PC-3 (cell line): ENCODE measurements at regions of chr3 and their contacts with region 1.

Region 1: DNA sequence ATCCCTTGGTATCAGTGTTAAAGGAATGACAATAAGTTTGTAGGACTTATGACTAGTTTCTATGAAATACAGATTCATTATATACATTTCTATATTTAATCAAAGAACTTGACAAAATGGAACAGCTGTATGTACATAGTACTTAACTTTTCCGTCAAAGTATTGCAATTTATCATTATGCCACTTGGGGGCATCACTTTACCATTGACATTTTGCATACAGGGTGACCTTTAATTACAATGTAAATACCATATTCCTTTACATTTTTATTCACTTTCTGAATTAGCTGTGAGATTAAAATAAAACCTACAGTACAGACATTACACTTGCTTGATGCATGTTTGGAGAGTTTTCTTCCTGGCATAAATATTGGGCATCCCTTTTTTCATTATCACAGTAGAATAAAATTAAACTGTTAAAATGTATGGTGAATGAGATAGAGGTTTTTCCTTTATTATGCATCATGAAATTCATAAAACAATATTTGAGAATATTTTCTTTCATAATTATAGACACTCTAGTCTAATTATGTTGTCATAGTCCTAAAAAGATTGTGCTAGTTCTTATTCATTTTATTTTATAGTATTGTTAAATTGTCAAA is 6.9 kb downstream of the NEK11 start:
- DNase-seq: peak; percentile 79
- ATAC-seq: 0 out of 2 replicates have a peak, but pooled peaks have one; percentile 18
- H3K4me3 ChIP-seq: no peak overlapping the region
- H3K27ac ChIP-seq: no peak overlapping the region
- H3K4me1 ChIP-seq: peaks cover 29% of the 10 kb centered on the region
- H3K27me3 ChIP-seq: no peaks in the 10 kb centered on the region
- CTCF ChIP-seq: peak; percentile 70

Region 2: GRCh38 chr3:130892759-130893375 is 140.7 kb before region 1 on chr3:
- CTCF ChIA-PET with region 1: no interaction called
- POLR2A ChIA-PET with region 1: no interaction called
- intact Hi-C with region 1: no loop called
- DNase-seq: peak; percentile 70
- ATAC-seq: peak; percentile 38
- H3K4me3 ChIP-seq: peak overlapping the region; percentile 85
- H3K27ac ChIP-seq: peak overlapping the region; percentile 81
- H3K4me1 ChIP-seq: peaks cover 14% of the 10 kb centered on the region; the same call in 1 of the 2 replicates
- H3K27me3 ChIP-seq: no peaks in the 10 kb centered on the region
- CTCF ChIP-seq: peak; percentile 83

Region 3: DNA sequence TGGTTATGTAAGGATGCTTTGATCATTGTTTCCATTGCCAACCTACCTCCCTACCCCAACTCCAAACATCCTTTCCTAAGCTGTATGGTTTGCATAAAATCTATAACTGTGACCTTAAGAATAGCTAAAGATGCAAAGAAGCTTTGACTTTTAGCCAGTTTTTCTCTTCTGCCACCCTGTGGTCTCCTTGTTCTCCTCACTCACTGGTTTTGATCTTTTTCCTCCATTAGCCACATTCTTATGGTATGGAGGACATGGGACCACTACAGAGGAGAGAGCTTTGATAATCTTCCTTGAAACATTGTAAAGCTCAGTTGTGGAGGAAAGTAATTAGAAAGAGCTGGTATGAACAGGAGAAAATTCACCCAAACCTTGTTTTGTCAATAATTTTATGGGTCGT is 109.0 kb after region 1 on chr3:
- CTCF ChIA-PET with region 1: no interaction called
- POLR2A ChIA-PET with region 1: no interaction called
- intact Hi-C with region 1: loop called (anchors 1 kb)
- DNase-seq: peak; percentile 35
- ATAC-seq: peak; percentile 73
- H3K4me3 ChIP-seq: no peak overlapping the region
- H3K27ac ChIP-seq: no peak overlapping the region
- H3K4me1 ChIP-seq: no peaks in the 10 kb centered on the region
- H3K27me3 ChIP-seq: no peaks in the 10 kb centered on the region
- CTCF ChIP-seq: peak; percentile 51

Region 4: GRCh38 chr3:131216801-131217200 is 183.2 kb after region 1 on chr3:
- CTCF ChIA-PET with region 1: no interaction called
- POLR2A ChIA-PET with region 1: no interaction called
- intact Hi-C with region 1: loop called (anchors 10 kb)
- DNase-seq: peak; percentile 80
- ATAC-seq: peak; percentile 73
- H3K4me3 ChIP-seq: peak overlapping the region; percentile 44; the same call in 1 of the 2 replicates
- H3K27ac ChIP-seq: peak overlapping the region; percentile 100
- H3K4me1 ChIP-seq: peaks cover 25% of the 10 kb centered on the region
- H3K27me3 ChIP-seq: no peaks in the 10 kb centered on the region
- CTCF ChIP-seq: no peak

Region 5: GRCh38 chr3:131250466-131250865 is 216.9 kb after region 1 on chr3:
- CTCF ChIA-PET with region 1: no interaction called
- POLR2A ChIA-PET with region 1: no interaction called
- intact Hi-C with region 1: no loop called
- DNase-seq: no peak
- ATAC-seq: no peak
- H3K4me3 ChIP-seq: no peak overlapping the region
- H3K27ac ChIP-seq: no peak overlapping the region
- H3K4me1 ChIP-seq: no peaks in the 10 kb centered on the region
- H3K27me3 ChIP-seq: no peaks in the 10 kb centered on the region
- CTCF ChIP-seq: no peak

Region 6: DNA sequence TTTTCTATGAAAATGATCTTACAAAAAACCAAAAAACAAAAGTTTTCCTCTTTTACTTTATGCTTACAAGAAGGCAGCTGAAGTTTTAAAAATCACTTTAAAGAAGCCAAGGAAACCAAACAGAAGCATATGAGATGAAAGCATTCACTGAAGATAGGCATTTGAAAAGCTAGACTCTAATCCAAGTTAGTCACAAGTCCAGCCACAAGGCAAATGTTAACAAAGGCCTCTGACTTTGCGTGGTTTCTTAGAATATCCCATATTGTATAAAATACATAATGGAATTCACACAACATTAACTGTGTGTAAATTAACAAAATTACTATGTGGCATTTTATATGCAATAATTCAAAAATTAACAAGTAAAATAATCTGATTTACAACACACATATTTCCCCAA is 451.5 kb after region 1 on chr3:
- CTCF ChIA-PET with region 1: no interaction called
- POLR2A ChIA-PET with region 1: no interaction called
- intact Hi-C with region 1: loop called (anchors 10 kb)
- DNase-seq: no peak
- ATAC-seq: no peak
- H3K4me3 ChIP-seq: no peak overlapping the region
- H3K27ac ChIP-seq: no peak overlapping the region
- H3K4me1 ChIP-seq: no peaks in the 10 kb centered on the region
- H3K27me3 ChIP-seq: no peaks in the 10 kb centered on the region
- CTCF ChIP-seq: no peak

Region 7: DNA sequence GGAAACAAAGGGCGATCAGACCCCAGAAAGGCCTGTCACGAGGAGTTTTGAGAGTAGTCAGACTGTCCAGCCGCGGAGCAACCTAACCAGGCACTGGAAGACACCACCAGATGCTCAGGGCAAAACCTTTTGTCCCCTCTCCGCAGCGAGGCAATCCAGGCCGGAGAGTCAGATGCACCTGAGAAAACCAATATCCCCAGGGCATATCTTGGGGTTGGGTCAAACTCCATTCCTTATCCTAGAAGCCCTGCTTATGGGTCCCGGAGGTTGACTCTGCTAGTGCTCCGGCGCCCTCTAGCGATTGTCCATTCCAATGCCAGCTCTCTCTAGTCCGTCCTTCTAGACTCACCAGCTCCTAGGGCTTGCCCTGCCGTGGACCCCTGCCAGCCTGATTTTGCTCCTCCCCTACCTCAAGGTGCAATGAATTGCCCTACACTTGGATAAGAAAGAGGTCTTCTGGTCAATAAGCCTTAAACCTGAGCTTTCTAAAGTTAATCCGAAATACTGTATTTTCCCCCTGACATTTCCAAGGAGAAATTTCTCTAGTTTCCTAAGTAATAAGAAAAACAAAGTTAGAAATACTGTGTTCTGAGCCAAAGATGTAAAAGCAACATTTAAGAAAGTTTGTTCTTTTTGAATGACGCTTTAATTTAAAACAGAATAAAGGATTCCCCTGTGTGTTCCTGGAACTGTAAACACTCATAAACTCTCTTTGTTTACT is 995.8 kb after region 1 on chr3:
- CTCF ChIA-PET with region 1: no interaction called
- POLR2A ChIA-PET with region 1: no interaction called
- intact Hi-C with region 1: loop called (anchors 5 kb)
- DNase-seq: peak; percentile 94
- ATAC-seq: peak; percentile 98
- H3K4me3 ChIP-seq: peak overlapping the region; percentile 34
- H3K27ac ChIP-seq: peak overlapping the region; percentile 64
- H3K4me1 ChIP-seq: peaks cover 13% of the 10 kb centered on the region
- H3K27me3 ChIP-seq: no peaks in the 10 kb centered on the region
- CTCF ChIP-seq: peak; percentile 87